Heart right ventricle (tissue), 16 donors: ENCODE measurements at regions of chr15 and their contacts with region 1.

Region 1: DNA sequence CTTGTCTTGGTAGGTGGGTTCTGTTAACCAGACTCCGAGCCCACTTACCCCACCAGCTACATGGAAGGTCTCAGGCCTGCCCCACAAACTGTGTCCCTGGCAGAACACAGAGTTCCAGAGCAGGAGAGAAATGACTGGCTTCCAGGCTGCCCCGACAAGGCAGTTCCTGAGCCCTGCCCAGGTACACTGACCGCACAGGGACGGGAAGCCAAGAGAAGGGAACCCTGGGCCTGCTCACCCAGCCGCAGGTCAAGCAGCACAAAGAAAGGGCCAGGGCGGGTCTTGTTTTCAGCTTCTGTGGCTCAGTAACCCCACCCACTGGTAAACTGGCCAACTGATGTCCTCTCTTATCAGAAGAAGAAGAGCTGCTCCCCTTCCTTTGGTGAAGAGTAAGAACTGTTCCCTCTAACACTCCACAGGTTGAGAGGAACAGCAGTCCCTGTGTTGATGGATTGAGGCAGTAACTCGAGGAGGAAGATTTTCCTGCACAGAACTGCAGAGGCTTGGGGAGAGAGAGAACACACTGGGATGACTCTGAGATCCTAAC is 68.4 kb downstream of the CRTC3 start:
- DNase-seq: peak; percentile 37 to 59
- ATAC-seq: peak; percentile 36 to 88 (median 74)
- H3K4me3 ChIP-seq: no peak overlapping the region
- H3K27ac ChIP-seq: peak overlapping the region in 9 of 10 donors; percentile 11 to 91 (median 52)
- H3K4me1 ChIP-seq: peaks cover 0 to 64% (median 40%) of the 10 kb centered on the region in 9 donors
- H3K27me3 ChIP-seq: no peaks in the 10 kb centered on the region
- CTCF ChIP-seq: peak in 6 of 9 donors; percentile 24 to 44 (median 36)

Region 2: GRCh38 chr15:90519688-90520087 is 78.4 kb before region 1 on chr15:
- intact Hi-C with region 1: loop called in 1 of 10 experiments (anchors 10 kb)
- DNase-seq: no peak
- ATAC-seq: no peak
- H3K4me3 ChIP-seq: no peak overlapping the region
- H3K27ac ChIP-seq: no peak overlapping the region
- H3K4me1 ChIP-seq: peaks cover 0 to 6% (median 0%) of the 10 kb centered on the region in 9 donors
- H3K27me3 ChIP-seq: no peaks in the 10 kb centered on the region
- CTCF ChIP-seq: no peak

Region 3: GRCh38 chr15:90560229-90560776 is 37.8 kb before region 1 on chr15:
- intact Hi-C with region 1: loop called in 3 of 10 experiments (anchors 5 kb)
- DNase-seq: peak; percentile 48 to 72
- ATAC-seq: peak; percentile 59 to 81 (median 68)
- H3K4me3 ChIP-seq: peak overlapping the region in 1 of 10 donors; percentile 1
- H3K27ac ChIP-seq: peak overlapping the region; percentile 75 to 89 (median 84)
- H3K4me1 ChIP-seq: peaks cover 48 to 99% (median 94%) of the 10 kb centered on the region in 9 donors
- H3K27me3 ChIP-seq: no peaks in the 10 kb centered on the region
- CTCF ChIP-seq: no peak